Naive thymus-derived CD8-positive, alpha-beta T cell (primary cell): ENCODE measurements at regions of chr17 and their contacts with region 1.

Region 1: GRCh38 chr17:32349854-32350665 is at the start of gene ZNF207:
- DNase-seq: peak; percentile 87 to 97 (median 93)
- ATAC-seq: peak; percentile 93 to 98
- H3K4me3 Mint-ChIP-seq: peak within 1 kb of the TSS; percentile 96 to 100 (median 98)
- H3K27ac Mint-ChIP-seq: peak within 1 kb of the TSS; percentile 98 to 100 (median 99)
- H3K4me1 Mint-ChIP-seq: peaks cover 15 to 44% (median 35%) of the 10 kb centered on the region in 4 donors
- H3K27me3 Mint-ChIP-seq: no peaks in the 10 kb centered on the region
- polyA plus RNA-seq, gene ZNF207: 120 to 137 (median 127) TPM

Region 2: DNA sequence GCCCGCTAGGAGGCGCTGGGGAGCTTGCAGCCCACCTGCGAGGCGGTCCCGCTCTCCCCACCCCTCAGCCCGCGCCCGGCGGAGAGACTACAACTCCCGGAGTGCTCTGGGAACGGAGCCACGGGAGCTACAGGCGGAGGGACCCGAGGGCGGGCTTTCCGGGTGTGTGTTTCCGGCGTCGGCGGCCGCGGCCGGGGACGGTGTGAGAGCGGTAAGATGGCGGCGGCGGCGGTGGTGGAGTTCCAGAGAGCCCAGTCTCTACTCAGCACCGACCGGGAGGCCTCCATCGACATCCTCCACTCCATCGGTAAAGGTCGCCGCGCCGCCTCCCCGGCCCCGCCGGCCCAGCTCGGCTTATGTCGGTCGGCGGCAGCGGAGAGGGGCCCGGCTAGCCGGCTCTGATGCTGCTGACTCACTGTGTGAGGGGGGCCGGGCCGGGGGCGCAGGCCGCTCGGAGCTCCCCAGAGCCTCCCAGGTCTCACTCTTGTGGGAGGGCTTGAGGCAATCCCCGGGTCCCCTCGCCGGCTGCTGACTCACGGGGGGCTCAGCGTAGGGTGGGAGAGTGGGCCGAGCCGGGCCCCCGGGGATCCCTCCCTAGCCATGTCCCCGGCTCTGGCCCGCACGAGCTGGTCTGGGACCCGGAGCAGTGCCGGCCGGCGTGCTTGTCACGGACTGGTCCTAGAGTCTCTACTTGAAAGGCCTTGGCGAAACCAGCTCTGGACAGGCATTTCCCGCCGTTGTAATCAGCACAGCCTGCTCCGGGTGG is 94.4 kb after region 1 on chr17 and contains the start of gene PSMD11:
- POLR2A ChIA-PET with region 1: interaction called, 13 read pairs
- DNase-seq: peak; percentile 98 to 100 (median 99)
- ATAC-seq: peak; percentile 95 to 97
- H3K4me3 Mint-ChIP-seq: peak within 1 kb of the TSS; percentile 77 to 97 (median 89)
- H3K27ac Mint-ChIP-seq: peak within 1 kb of the TSS; percentile 23 to 94 (median 89)
- H3K4me1 Mint-ChIP-seq: peaks cover 7 to 39% (median 37%) of the 10 kb centered on the region in 4 donors
- H3K27me3 Mint-ChIP-seq: no peaks in the 10 kb centered on the region
- polyA plus RNA-seq, gene PSMD11: 102 to 122 (median 112) TPM